Prostate gland (tissue), 2 donors: ENCODE measurements at regions of chr1 and their contacts with region 1.

Region 1: DNA sequence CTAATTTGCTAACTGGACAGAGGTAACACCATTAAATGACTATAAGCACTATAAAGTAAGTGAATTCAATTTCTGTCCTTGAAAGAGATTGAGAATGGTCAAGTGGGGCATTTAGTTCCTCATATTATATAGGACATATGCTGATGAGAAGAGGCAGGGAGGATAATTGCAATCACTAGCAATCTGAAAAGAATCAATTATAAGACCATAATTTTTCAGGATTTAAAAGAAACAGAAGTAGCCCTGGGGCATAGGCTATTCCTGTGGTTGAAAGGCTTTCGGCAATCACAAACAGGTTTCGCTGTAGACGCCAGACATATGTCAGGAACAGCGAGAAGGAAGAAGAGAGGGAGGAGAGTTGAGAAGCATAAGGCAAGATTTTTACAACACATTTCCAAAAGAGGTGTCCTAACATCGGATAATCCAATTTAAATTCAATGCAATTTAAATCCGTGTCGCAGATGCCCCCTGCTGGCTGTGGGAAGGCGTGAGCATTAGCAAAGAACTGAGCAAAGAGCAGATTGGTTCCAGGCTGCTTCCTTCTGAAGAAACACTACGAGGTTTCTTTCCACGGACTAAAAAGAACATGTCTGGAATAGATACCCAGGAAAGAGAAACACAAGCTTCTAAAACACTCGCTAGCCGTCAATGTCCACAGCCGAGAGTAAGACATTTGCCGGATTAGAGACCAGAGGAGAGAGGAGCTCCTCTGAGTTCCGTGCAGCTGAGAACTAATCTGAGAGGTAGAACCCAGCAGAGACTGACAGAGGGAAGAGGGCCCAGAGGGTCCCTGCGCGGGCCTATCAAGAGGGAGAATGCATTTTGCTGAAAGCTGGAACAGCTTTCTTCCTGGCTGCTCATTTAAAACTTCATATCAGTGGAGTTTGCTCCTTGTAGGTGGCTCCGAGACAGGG is 27.9 kb downstream of the RGS5 start:
- DNase-seq: peak; percentile 43
- H3K4me3 ChIP-seq: no peak overlapping the region
- H3K27ac ChIP-seq: no peak overlapping the region
- H3K4me1 ChIP-seq: no peaks in the 10 kb centered on the region
- H3K27me3 ChIP-seq: no peaks in the 10 kb centered on the region
- CTCF ChIP-seq: peak; percentile 55 to 80 (median 70)
- POLR2A ChIP-seq: no peak

Region 2: GRCh38 chr1:162854245-162854882 is 320.4 kb before region 1 on chr1:
- intact Hi-C with region 1: loop called (anchors 5 kb)
- DNase-seq: peak; percentile 54
- H3K4me3 ChIP-seq: no peak overlapping the region
- H3K27ac ChIP-seq: no peak overlapping the region
- H3K4me1 ChIP-seq: no peaks in the 10 kb centered on the region
- H3K27me3 ChIP-seq: no peaks in the 10 kb centered on the region
- CTCF ChIP-seq: peak; percentile 50 to 76 (median 72)
- POLR2A ChIP-seq: no peak